Left ventricle myocardium inferior (tissue), 1 donor: ENCODE measurements at regions of chr14 and their contacts with region 1.

Region 1: GRCh38 chr14:54347997-54348611 is 48.7 kb upstream of the CDKN3 start:
- DNase-seq: no peak
- H3K4me3 ChIP-seq: no peak overlapping the region
- H3K27ac ChIP-seq: peak overlapping the region; percentile 73
- H3K4me1 ChIP-seq: peaks cover 22% of the 10 kb centered on the region
- H3K27me3 ChIP-seq: no peaks in the 10 kb centered on the region
- CTCF ChIP-seq: peak; percentile 81

Region 2: GRCh38 chr14:53295985-53296582 is 1052.0 kb before region 1 on chr14:
- intact Hi-C with region 1: loop called (anchors 10 kb)
- DNase-seq: no peak
- H3K4me3 ChIP-seq: no peak overlapping the region
- H3K27ac ChIP-seq: no peak overlapping the region
- H3K4me1 ChIP-seq: no peaks in the 10 kb centered on the region
- H3K27me3 ChIP-seq: no peaks in the 10 kb centered on the region
- CTCF ChIP-seq: peak; percentile 77